ENCODE measurements at regions of chr1 and their contacts with region 1.

Region 1: DNA sequence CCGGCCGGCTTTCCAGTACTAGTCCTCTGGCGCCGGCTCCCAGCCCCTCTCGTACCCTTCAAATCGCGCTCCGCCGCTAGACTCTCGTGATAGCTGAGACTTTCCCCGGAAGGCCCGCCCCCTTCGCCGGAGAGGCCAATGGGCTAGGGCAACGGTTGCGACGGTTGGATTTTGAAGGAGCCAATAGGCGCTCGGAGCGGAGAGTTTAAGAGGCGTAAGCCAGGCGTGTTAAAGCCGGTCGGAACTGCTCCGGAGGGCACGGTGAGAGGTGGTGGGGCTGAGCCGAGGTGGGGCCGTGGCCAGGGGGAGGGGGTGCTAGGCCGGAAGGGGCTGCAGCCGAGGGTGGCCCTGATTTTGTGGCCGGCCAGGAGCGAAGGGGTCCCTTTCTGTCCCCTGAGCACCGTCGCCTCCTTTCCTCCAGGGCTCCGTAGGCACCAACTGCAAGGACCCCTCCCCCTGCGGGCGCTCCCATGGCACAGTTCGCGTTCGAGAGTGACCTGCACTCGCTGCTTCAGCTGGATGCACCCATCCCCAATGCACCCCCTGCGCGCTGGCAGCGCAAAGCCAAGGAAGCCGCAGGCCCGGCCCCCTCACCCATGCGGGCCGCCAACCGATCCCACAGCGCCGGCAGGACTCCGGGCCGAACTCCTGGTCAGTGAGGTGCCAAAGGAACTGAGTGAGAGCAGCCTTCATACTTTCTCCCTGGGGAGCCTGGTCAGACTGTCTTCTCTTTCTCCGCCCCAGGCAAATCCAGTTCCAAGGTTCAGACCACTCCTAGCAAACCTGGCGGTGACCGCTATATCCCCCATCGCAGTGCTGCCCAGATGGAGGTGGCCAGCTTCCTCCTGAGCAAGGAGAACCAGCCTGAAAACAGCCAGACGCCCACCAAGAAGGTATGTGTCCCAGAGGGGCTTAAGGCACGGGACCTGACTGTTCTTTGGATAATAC is at the start of gene CDC20:
- DNase-seq: peak; percentile 99
- H3K4me3 Mint-ChIP-seq: peak within 1 kb of the TSS; percentile 96
- H3K27ac Mint-ChIP-seq: peak within 1 kb of the TSS; percentile 92
- H3K4me1 Mint-ChIP-seq: peaks cover 50% of the 10 kb centered on the region
- H3K27me3 Mint-ChIP-seq: no peaks in the 10 kb centered on the region
- total RNA-seq, gene CDC20: 82.9 and 91.8 TPM in 2 replicates

Region 2: GRCh38 chr1:43227143-43227764 is 131.8 kb before region 1 on chr1:
- intact Hi-C with region 1: loop called (anchors 1 kb)
- DNase-seq: peak; percentile 67
- H3K4me3 Mint-ChIP-seq: no peak overlapping the region
- H3K27ac Mint-ChIP-seq: no peak overlapping the region
- H3K4me1 Mint-ChIP-seq: no peaks in the 10 kb centered on the region
- H3K27me3 Mint-ChIP-seq: peaks cover 6% of the 10 kb centered on the region

Region 3: DNA sequence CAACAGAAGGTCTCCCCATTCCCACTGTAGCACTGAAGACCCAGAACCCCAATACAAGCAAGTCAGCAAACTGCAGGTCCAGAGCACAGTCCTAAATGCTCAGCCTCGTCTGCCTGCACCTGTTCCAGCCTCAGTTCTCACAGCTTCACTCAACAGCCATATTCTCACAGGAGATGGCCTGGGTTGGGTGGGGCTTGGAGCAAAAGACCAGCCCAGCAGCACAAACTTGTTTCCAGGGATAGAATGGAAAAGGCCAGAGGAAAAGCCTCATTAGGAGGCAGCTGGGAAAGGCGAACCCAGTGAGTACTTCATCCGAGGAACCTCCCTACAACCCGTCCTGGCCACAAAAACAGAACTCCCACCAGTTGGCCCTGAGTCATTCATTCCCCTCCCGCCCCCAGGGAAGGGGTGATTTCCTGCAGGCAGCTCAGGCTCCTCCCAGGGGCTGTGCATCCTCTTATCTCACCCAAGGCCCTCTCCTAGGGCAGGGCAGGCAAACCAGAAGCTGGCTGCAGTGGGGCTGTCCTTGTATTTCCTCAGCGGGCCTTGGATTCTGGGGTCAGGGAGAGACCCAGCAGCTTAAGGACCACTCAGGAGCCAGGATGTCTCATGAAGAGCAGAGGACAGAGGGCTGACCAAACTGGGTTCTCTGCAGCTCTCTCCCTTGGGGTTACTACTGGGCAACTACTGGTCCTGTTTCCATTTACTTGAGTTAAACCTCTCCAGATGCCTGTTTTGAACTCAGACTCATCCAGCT is 28.8 kb before region 1 on chr1:
- intact Hi-C with region 1: loop called (anchors 2 kb)
- DNase-seq: peak; percentile 14
- H3K4me3 Mint-ChIP-seq: peak overlapping the region; percentile 2
- H3K27ac Mint-ChIP-seq: peak overlapping the region; percentile 80
- H3K4me1 Mint-ChIP-seq: peaks cover 28% of the 10 kb centered on the region
- H3K27me3 Mint-ChIP-seq: peaks cover 3% of the 10 kb centered on the region

Region 4: DNA sequence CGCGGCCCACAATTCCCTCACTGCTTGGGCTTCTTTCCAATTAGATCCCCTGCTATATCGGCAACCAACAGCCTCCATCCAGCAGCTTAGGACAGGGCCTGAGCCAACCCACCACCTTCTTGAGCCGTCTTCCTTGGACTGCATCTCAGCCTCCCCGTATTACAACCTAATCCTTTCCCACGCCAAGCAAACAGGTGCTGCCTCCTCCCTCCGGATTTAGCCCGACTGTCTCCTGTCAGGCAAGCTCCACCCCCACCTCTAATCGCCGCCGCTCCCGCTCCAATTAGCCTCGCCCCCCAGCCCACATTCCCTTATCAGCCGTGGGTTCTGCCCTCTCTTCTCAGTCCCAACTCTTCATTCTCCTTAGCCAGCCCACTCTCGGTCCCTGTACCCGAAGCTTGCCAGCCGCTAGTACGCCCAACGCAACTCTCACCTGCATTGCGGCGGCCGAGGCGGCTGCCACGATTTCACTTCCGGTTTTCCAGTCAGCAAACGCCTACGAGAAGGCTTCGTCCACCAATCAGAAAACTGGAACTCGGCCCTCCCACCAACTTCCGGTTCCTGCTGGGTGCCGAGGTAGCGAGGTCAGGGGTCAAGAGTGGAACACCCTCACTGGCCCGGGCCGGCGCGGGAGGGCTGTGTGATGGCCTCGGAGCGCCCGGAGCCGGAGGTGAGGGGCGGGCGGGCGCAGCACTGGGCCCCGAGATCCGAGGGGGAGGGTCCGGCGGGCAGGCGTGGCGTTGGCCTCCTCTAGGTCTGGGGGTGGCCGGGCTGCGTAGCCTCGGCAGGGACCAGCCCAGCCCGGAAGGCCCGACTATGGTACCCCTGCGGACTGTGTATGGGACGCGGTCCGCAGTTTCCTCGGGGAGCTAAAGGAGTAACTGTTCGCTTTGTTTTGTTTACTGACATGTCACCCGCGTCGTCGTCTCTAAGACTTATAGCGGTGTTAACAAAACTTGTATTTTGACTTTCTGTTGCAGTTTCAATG is 30.6 kb after region 1 on chr1 and contains the starts of genes MED8 and SZT2:
- intact Hi-C with region 1: loop called (anchors 1 kb)
- DNase-seq: peak; percentile 93
- H3K4me3 Mint-ChIP-seq: peak within 1 kb of the TSS; percentile 99
- H3K27ac Mint-ChIP-seq: peak within 1 kb of the TSS; percentile 92
- H3K4me1 Mint-ChIP-seq: peaks cover 40% of the 10 kb centered on the region
- H3K27me3 Mint-ChIP-seq: no peaks in the 10 kb centered on the region
- total RNA-seq, gene MED8: 43.0 and 48.5 TPM in 2 replicates
- total RNA-seq, gene SZT2: 59.2 and 64.5 TPM in 2 replicates

Region 5: GRCh38 chr1:43454266-43455011 is 95.4 kb after region 1 on chr1:
- intact Hi-C with region 1: loop called (anchors 1 kb)
- DNase-seq: peak; percentile 61
- H3K4me3 Mint-ChIP-seq: peak overlapping the region; percentile 84
- H3K27ac Mint-ChIP-seq: peak overlapping the region; percentile 79
- H3K4me1 Mint-ChIP-seq: peaks cover 18% of the 10 kb centered on the region
- H3K27me3 Mint-ChIP-seq: peaks cover 28% of the 10 kb centered on the region

Region 6: DNA sequence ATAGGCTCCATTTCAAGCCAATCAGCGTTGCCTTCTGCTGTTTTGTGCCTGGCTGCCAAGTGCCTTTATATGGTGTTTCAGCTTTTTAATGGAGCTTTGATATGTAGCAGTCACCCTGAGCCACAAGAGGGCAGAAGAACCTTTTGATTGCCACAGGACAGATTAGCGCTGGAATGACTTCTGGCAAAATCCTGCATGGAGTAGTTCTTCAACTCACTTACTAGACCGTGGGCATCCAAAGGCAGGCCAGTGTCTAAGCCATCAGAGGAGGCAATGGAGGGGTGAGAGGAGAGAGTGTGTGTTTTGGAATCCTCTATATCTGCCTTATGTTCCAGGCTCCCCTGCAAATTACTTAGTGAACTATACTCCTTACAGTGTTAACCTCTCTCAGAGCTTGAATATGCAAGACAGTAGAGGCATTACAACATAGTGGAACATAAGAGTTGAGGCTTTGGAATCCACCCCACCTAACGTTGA is 404.5 kb after region 1 on chr1:
- intact Hi-C with region 1: no loop called
- DNase-seq: peak; percentile 25
- H3K4me3 Mint-ChIP-seq: no peak overlapping the region
- H3K27ac Mint-ChIP-seq: no peak overlapping the region
- H3K4me1 Mint-ChIP-seq: peaks cover 5% of the 10 kb centered on the region
- H3K27me3 Mint-ChIP-seq: no peaks in the 10 kb centered on the region

Region 7: GRCh38 chr1:44616991-44617702 is 1258.1 kb after region 1 on chr1:
- intact Hi-C with region 1: no loop called
- DNase-seq: no peak
- H3K4me3 Mint-ChIP-seq: no peak overlapping the region
- H3K27ac Mint-ChIP-seq: no peak overlapping the region
- H3K4me1 Mint-ChIP-seq: no peaks in the 10 kb centered on the region
- H3K27me3 Mint-ChIP-seq: no peaks in the 10 kb centered on the region

Measured in activated T-helper 1 cell treated with anti-CD3 and anti-CD28 coated beads, Interleukin-12 subunit alpha, Interleukin-12 subunit beta, Interleukin-2, Interleukin-4 antibody, amounts not matched to agents 30 ng/mL and 10 ng/mL and 1 ng/mL, durations not matched to agents 14 hours and 24 hours and 36 hours (primary cell).